ENCODE measurements at regions of chr1 and their contacts with region 1.

Region 1: GRCh38 chr1:161792740-161793139 is 26.6 kb downstream of the ATF6 start:
- DNase-seq: no peak
- ATAC-seq: peak; percentile 60
- H3K4me3 Mint-ChIP-seq: no peak overlapping the region
- H3K27ac Mint-ChIP-seq: no peak overlapping the region
- H3K4me1 Mint-ChIP-seq: peaks cover 2% of the 10 kb centered on the region
- H3K27me3 Mint-ChIP-seq: no peaks in the 10 kb centered on the region
- CTCF ChIP-seq: no peak

Region 2: DNA sequence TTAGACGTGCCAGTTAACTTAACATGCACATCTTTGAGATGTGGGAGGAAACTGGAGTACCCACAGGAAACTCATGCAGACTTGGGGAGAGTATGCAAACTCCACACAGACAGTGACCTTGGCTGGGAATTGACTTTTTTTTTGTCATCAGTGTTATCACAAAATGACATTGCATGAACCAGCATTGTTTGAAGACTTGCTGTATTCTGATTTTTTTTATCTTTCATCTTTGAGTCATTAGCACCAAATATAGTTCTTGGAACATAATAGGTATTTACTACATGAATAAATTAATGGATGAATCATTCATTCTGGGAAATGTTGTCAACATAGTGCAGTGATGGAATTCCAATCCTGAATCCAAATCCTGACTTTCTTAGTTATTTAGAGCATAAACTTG is 50.4 kb after region 1 on chr1:
- CTCF ChIA-PET with region 1: no interaction called
- POLR2A ChIA-PET with region 1: no interaction called
- intact Hi-C with region 1: loop called (anchors 10 kb)
- DNase-seq: no peak
- ATAC-seq: no peak
- H3K4me3 Mint-ChIP-seq: no peak overlapping the region
- H3K27ac Mint-ChIP-seq: no peak overlapping the region
- H3K4me1 Mint-ChIP-seq: no peaks in the 10 kb centered on the region
- H3K27me3 Mint-ChIP-seq: no peaks in the 10 kb centered on the region
- CTCF ChIP-seq: no peak

Region 3: GRCh38 chr1:162040681-162041080 is 247.9 kb after region 1 on chr1:
- CTCF ChIA-PET with region 1: interaction called, 12 read pairs
- POLR2A ChIA-PET with region 1: no interaction called
- intact Hi-C with region 1: loop called (anchors 1 kb)
- DNase-seq: no peak
- ATAC-seq: no peak
- H3K4me3 Mint-ChIP-seq: no peak overlapping the region
- H3K27ac Mint-ChIP-seq: no peak overlapping the region
- H3K4me1 Mint-ChIP-seq: no peaks in the 10 kb centered on the region
- H3K27me3 Mint-ChIP-seq: peaks cover 46% of the 10 kb centered on the region
- CTCF ChIP-seq: no peak

Region 4: DNA sequence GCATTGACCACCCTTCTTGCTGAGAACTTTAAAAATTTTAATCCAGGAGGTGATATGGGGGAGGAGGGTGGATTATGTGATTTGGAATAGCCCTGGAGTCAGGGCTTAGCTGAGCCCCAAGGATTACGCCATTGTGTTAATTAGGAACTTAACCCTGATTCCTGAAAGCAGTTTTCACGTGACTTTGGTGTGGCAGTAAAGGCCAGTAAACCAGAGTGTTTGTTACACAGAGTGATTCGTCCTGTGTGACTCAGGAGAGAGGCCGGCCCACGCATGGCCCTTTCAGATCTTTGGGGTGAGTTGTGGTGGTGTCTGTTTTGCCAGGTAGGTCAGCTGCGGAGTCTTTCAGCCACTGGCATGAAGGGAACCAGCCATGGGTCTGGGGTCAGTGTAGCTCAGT is 384.4 kb after region 1 on chr1:
- CTCF ChIA-PET with region 1: no interaction called
- POLR2A ChIA-PET with region 1: no interaction called
- intact Hi-C with region 1: no loop called
- DNase-seq: no peak
- ATAC-seq: no peak
- H3K4me3 Mint-ChIP-seq: no peak overlapping the region
- H3K27ac Mint-ChIP-seq: no peak overlapping the region
- H3K4me1 Mint-ChIP-seq: no peaks in the 10 kb centered on the region
- H3K27me3 Mint-ChIP-seq: peaks cover 9% of the 10 kb centered on the region
- CTCF ChIP-seq: no peak

Region 5: GRCh38 chr1:162391790-162392563 is 599.2 kb after region 1 on chr1:
- CTCF ChIA-PET with region 1: no interaction called
- POLR2A ChIA-PET with region 1: no interaction called
- intact Hi-C with region 1: loop called (anchors 5 kb)
- DNase-seq: no peak
- ATAC-seq: no peak
- H3K4me3 Mint-ChIP-seq: no peak overlapping the region
- H3K27ac Mint-ChIP-seq: no peak overlapping the region
- H3K4me1 Mint-ChIP-seq: peaks cover 8% of the 10 kb centered on the region
- H3K27me3 Mint-ChIP-seq: peaks cover 14% of the 10 kb centered on the region
- CTCF ChIP-seq: no peak

Region 6: GRCh38 chr1:162627662-162628296 is 835.0 kb after region 1 on chr1:
- CTCF ChIA-PET with region 1: interaction called, 3 read pairs
- POLR2A ChIA-PET with region 1: no interaction called
- intact Hi-C with region 1: loop called (anchors 10 kb)
- DNase-seq: no peak
- ATAC-seq: no peak
- H3K4me3 Mint-ChIP-seq: no peak overlapping the region
- H3K27ac Mint-ChIP-seq: no peak overlapping the region
- H3K4me1 Mint-ChIP-seq: no peaks in the 10 kb centered on the region
- H3K27me3 Mint-ChIP-seq: peaks cover 27% of the 10 kb centered on the region
- CTCF ChIP-seq: no peak

Measured in activated B cell treated with CpG ODN at 0.5 μM for 24 hours (primary cell).